Psoas muscle (tissue), 8 donors: ENCODE measurements at regions of chr5 and their contacts with region 1.

Region 1: GRCh38 chr5:140214831-140215230 is 39.8 kb downstream of the CYSTM1 start:
- DNase-seq: peak; percentile 79 to 87
- ATAC-seq: peak; percentile 86 to 93 (median 92)
- H3K4me3 ChIP-seq: no peak overlapping the region
- H3K27ac ChIP-seq: peak overlapping the region; percentile 78
- H3K4me1 ChIP-seq: peaks cover 65% of the 10 kb centered on the region
- H3K27me3 ChIP-seq: no peaks in the 10 kb centered on the region
- CTCF ChIP-seq: no peak

Region 2: DNA sequence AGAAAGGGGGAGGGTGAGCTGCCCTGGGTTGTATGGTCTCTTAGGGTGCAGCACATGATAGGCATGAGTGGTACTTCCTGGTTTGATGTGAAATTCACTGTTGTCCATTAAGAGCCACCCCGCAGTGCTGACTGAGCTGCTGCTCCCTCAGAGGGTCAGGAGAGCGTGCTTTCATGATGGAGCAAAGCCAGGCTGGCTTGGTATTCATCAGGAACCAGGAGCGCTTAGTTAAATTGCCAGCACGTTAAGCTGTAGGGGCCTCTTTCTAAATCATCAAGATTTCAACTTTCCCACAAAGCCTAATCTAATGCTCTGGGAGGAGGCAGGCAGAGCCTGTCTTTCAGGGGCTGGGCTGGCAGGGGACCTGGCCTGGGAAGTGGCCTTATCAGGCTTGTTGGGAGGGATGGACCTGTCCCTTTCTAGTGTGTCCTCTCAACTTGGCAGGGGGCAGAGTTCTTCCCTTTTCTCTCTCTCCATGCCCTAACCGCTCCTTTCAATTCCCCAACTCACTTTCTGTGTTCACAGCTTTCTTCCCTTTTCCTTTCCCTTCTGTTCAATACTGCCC is 31.9 kb before region 1 on chr5:
- intact Hi-C with region 1: loop called in 1 of 2 experiments (anchors 5 kb)
- DNase-seq: peak; percentile 28 to 54
- ATAC-seq: peak; percentile 23 to 40 (median 37)
- H3K4me3 ChIP-seq: no peak overlapping the region
- H3K27ac ChIP-seq: peak overlapping the region; percentile 100
- H3K4me1 ChIP-seq: peaks cover 82% of the 10 kb centered on the region
- H3K27me3 ChIP-seq: no peaks in the 10 kb centered on the region
- CTCF ChIP-seq: no peak